Activated CD4-positive, alpha-beta T cell treated with anti-CD3 and anti-CD28 coated beads for 36 hours (primary cell): ENCODE measurements at regions of chr6 and their contacts with region 1.

Region 1: GRCh38 chr6:14144678-14145113 is 27.1 kb downstream of the CD83 start:
- DNase-seq: peak; percentile 87
- ATAC-seq: peak; percentile 95
- H3K4me3 Mint-ChIP-seq: no peak overlapping the region
- H3K27ac Mint-ChIP-seq: no peak overlapping the region
- H3K4me1 Mint-ChIP-seq: peaks cover 5% of the 10 kb centered on the region
- H3K27me3 Mint-ChIP-seq: no peaks in the 10 kb centered on the region

Region 2: GRCh38 chr6:14046476-14047068 is 98.1 kb before region 1 on chr6:
- CTCF ChIA-PET with region 1: interaction called, 16 read pairs
- POLR2A ChIA-PET with region 1: no interaction called
- intact Hi-C with region 1: loop called in 1 of 2 experiments (anchors 1 kb)
- DNase-seq: peak; percentile 70
- ATAC-seq: peak; percentile 95
- H3K4me3 Mint-ChIP-seq: no peak overlapping the region
- H3K27ac Mint-ChIP-seq: no peak overlapping the region
- H3K4me1 Mint-ChIP-seq: no peaks in the 10 kb centered on the region
- H3K27me3 Mint-ChIP-seq: peaks cover 22% of the 10 kb centered on the region

Region 3: DNA sequence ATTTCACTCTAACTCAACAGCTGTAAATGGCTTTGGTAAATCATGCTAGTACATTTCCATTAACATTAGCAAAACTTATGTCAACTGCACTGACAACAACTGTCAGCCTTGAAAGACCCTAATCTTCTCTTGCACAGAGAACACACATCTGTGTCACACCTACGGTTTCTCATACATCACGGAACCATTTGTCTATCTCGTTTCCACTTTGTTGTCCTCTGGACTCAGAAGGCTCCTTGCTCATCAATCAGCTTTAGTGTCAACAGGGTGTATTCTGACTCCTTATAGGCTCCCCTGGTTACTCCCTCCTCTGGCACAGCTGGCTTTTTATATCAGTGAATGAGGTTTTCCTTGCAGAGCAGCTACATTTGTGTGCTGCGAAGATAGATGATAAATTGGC is 22.1 kb after region 1 on chr6:
- CTCF ChIA-PET with region 1: no interaction called
- POLR2A ChIA-PET with region 1: no interaction called
- intact Hi-C with region 1: no loop called
- DNase-seq: no peak
- ATAC-seq: peak; percentile 51
- H3K4me3 Mint-ChIP-seq: no peak overlapping the region
- H3K27ac Mint-ChIP-seq: no peak overlapping the region
- H3K4me1 Mint-ChIP-seq: peaks cover 5% of the 10 kb centered on the region
- H3K27me3 Mint-ChIP-seq: peaks cover 2% of the 10 kb centered on the region

Region 4: DNA sequence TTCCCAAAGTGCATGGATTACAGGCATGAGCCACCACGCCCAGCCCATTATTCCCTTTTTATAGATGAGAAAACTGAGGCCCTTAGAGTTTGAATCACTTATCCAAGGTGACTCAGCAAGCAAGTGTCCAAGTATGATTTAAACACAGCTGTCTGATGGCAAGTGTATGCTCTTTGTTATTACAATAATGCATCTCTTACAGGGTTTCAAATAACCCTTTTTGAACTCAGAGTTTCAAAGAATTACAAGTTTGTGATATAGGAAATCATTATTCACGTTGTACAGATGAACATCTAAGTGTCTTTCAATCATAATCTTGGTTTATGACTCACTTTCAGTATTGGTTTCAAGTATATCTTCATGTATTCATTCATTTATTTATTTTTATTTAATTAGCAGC is 35.9 kb after region 1 on chr6:
- CTCF ChIA-PET with region 1: no interaction called
- POLR2A ChIA-PET with region 1: no interaction called
- intact Hi-C with region 1: loop called in 1 of 2 experiments (anchors 2 kb)
- DNase-seq: no peak
- ATAC-seq: peak; percentile 88
- H3K4me3 Mint-ChIP-seq: no peak overlapping the region
- H3K27ac Mint-ChIP-seq: no peak overlapping the region
- H3K4me1 Mint-ChIP-seq: peaks cover 8% of the 10 kb centered on the region
- H3K27me3 Mint-ChIP-seq: peaks cover 2% of the 10 kb centered on the region